T-cell (primary cell): ENCODE measurements at regions of chr12 and their contacts with region 1.

Region 1: DNA sequence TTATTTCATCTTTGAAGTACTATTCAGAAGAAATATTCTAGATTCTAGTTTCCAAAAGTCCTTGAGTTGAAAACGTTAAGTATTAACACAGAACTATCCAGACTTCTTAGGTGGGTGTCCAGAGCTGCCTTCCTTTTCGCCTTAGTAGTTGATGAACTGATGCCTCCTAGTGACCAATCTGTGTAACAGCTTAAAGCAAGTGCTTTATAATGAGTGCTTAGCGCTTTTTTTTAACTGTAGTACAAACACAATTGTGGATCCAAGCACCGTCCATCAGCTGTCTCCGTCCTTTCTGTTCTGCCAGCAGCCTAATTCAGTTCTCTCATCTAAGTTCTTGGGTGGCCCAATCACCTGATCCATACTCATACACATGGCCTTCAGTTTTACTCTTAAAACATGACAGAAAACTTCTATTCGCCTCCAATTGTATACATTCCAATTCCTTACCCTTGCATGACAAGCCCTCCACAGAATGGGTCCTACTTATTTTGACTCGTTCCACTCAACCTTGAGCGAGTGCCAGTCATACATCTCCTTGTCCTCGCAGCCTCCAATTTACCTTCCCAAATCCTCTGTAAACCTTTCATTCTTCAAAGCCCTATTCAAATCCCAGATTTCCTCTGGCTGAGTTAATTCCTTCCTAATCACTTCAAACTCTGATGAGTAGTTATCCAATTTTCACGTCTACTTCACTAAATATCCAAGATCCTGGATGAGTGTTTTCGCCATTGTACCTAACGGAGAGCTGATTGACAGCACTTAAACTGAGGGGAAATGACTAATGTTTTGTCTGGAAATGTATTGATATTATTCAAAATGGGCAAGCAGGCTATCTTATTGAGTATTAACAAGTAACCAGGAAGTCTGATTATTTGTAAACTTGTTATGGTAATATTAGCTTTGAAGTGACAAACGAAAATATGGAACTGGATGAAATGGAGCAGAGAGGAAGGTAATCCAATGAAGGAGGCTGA is 5.8 kb upstream of the PHLDA1 start:
- DNase-seq: peak in 13 of 35 experiments; percentile 12 to 79 (median 27)
- ATAC-seq: peak; percentile 66 to 78 (median 69)
- H3K4me3 ChIP-seq: no peak overlapping the region
- H3K4me3 Mint-ChIP-seq: no peak overlapping the region
- H3K27ac ChIP-seq: no peak overlapping the region
- H3K27ac Mint-ChIP-seq: no peak overlapping the region
- H3K4me1 ChIP-seq: peaks cover under 1 to 2% of the 10 kb centered on the region in 2 experiments
- H3K4me1 Mint-ChIP-seq: peaks cover 13 to 16% (median 15%) of the 10 kb centered on the region in 3 donors
- H3K27me3 ChIP-seq: no peaks in the 10 kb centered on the region
- H3K27me3 Mint-ChIP-seq: no peaks in the 10 kb centered on the region

Region 2: GRCh38 chr12:74752215-74752614 is 1285.2 kb before region 1 on chr12:
- CTCF ChIA-PET with region 1: no interaction called
- POLR2A ChIA-PET with region 1: no interaction called
- DNase-seq: no peak
- ATAC-seq: no peak
- H3K4me3 ChIP-seq: no peak overlapping the region
- H3K4me3 Mint-ChIP-seq: no peak overlapping the region
- H3K27ac ChIP-seq: no peak overlapping the region
- H3K27ac Mint-ChIP-seq: no peak overlapping the region
- H3K4me1 ChIP-seq: no peaks in the 10 kb centered on the region
- H3K4me1 Mint-ChIP-seq: no peaks in the 10 kb centered on the region
- H3K27me3 ChIP-seq: no peaks in the 10 kb centered on the region
- H3K27me3 Mint-ChIP-seq: no peaks in the 10 kb centered on the region

Region 3: GRCh38 chr12:75526655-75527511 is 510.5 kb before region 1 on chr12:
- CTCF ChIA-PET with region 1: interaction called, 6 to 39 read pairs
- POLR2A ChIA-PET with region 1: interaction called in 1 of 2 experiments, 3 read pairs
- DNase-seq: peak in 3 of 35 experiments; percentile 1 to 59 (median 5)
- ATAC-seq: peak in 1 of 4 experiments; percentile 35
- H3K4me3 ChIP-seq: no peak overlapping the region
- H3K4me3 Mint-ChIP-seq: no peak overlapping the region
- H3K27ac ChIP-seq: no peak overlapping the region
- H3K27ac Mint-ChIP-seq: no peak overlapping the region
- H3K4me1 ChIP-seq: peaks cover 0 to 3% of the 10 kb centered on the region in 2 experiments
- H3K4me1 Mint-ChIP-seq: peaks cover 0 to 3% (median 0%) of the 10 kb centered on the region in 3 donors
- H3K27me3 ChIP-seq: peaks cover 0 to 3% of the 10 kb centered on the region in 2 experiments
- H3K27me3 Mint-ChIP-seq: peaks cover 30 to 32% of the 10 kb centered on the region in 2 donors